ENCODE measurements at regions of chr12 and their contacts with region 1.

Region 1: DNA sequence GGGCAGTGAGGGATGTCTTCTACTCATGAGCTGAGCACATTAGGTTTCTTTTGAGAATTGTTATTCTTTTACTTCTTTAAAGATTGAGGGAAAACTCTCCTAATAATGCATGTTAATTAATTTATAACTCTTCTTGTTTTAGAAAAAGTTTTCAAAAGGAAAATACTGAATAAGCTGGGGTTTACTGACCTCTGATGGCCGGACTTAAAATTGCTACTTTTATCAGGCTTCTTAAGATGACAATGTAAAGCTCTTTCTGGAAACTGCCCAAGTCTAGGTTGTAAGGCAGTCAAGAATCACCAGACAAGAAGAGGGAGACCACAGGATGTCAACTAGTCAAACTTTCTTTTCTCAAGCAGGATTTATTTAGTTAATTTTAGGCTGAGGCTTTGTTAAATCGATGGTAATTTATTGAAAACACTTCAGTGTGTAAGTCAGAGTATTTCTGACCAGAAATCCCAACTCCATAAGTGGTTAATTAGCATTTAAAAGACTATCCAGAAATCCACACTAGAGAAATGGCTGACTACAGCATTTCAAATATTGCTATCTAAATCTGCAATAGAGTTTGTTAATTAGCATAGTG is 82.1 kb downstream of the AVPR1A start:
- DNase-seq: peak; percentile 75
- ATAC-seq: peak; percentile 67
- H3K4me3 ChIP-seq: no peak overlapping the region
- H3K27ac ChIP-seq: no peak overlapping the region
- H3K4me1 ChIP-seq: no peaks in the 10 kb centered on the region
- H3K27me3 ChIP-seq: 0 out of 2 replicates have a peak, but pooled peaks cover 2% of the 10 kb centered on the region
- CTCF ChIP-seq: peak; percentile 70
- POLR2A ChIP-seq: no peak
- RAD21 ChIP-seq: peak; percentile 81

Region 2: DNA sequence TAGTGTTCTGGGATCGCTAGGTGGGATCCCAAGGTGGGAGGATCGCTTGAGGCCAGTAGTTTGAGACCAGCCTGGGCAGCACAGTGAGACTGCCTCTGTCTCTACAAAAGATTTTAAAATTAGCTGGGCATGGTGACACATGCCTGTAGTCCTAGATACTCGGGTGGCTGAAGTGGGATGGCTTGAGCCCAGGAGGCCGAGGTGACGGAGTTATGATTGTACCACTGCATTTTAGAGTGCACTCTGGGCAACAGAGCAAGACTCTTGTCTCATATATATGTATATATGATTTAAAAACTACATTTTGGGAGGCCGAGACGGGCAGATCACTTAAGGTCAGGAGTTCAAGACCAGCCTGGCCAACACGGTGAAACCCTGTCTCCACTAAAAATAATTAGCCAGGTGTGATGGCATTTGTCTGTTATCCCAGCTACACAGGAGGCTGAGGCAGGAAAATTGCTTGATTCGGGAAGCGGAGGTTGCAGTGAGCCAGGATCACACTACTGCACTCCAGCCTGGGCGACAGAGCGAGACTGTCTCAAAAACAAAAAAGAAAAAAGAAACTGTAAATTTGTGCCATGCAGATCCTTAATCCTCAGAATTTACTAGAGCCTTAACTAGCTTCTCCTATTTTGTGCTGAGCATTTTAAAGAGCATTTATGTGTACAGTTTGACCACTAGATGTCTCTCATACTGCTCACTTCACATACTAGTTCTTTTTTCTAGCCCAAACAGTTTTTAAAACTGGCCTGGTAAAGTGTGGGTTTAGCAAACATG is 487.5 kb before region 1 on chr12:
- CTCF ChIA-PET with region 1: interaction called, 3 read pairs
- POLR2A ChIA-PET with region 1: no interaction called
- dilution Hi-C with region 1: no loop called
- in situ Hi-C with region 1: loop called (anchors 25 kb)
- intact Hi-C with region 1: no loop called
- DNase-seq: peak; percentile 73
- ATAC-seq: peak; percentile 90
- H3K4me3 ChIP-seq: no peak overlapping the region
- H3K27ac ChIP-seq: no peak overlapping the region
- H3K4me1 ChIP-seq: no peaks in the 10 kb centered on the region
- H3K27me3 ChIP-seq: no peaks in the 10 kb centered on the region
- CTCF ChIP-seq: peak; percentile 73
- POLR2A ChIP-seq: no peak
- RAD21 ChIP-seq: peak; percentile 77

Region 3: GRCh38 chr12:62603061-62603810 is 465.7 kb before region 1 on chr12:
- CTCF ChIA-PET with region 1: no interaction called
- POLR2A ChIA-PET with region 1: no interaction called
- dilution Hi-C with region 1: no loop called
- in situ Hi-C with region 1: loop called (anchors 25 kb)
- intact Hi-C with region 1: loop called (anchors 10 kb)
- DNase-seq: peak; percentile 89
- ATAC-seq: peak; percentile 90
- H3K4me3 ChIP-seq: peak overlapping the region; percentile 97
- H3K27ac ChIP-seq: peak overlapping the region; percentile 99
- H3K4me1 ChIP-seq: no peaks in the 10 kb centered on the region; the same call in 1 of the 2 replicates
- H3K27me3 ChIP-seq: no peaks in the 10 kb centered on the region
- CTCF ChIP-seq: peak; percentile 60
- POLR2A ChIP-seq: peak; percentile 88
- RAD21 ChIP-seq: peak; percentile 56

Region 4: GRCh38 chr12:62799126-62799736 is 269.7 kb before region 1 on chr12:
- CTCF ChIA-PET with region 1: interaction called, 6 read pairs
- POLR2A ChIA-PET with region 1: no interaction called
- dilution Hi-C with region 1: no loop called
- in situ Hi-C with region 1: no loop called
- intact Hi-C with region 1: loop called (anchors 1 kb)
- DNase-seq: peak; percentile 72
- ATAC-seq: peak; percentile 94
- H3K4me3 ChIP-seq: no peak overlapping the region
- H3K27ac ChIP-seq: no peak overlapping the region
- H3K4me1 ChIP-seq: no peaks in the 10 kb centered on the region
- H3K27me3 ChIP-seq: no peaks in the 10 kb centered on the region
- CTCF ChIP-seq: peak; percentile 93
- POLR2A ChIP-seq: no peak
- RAD21 ChIP-seq: peak; percentile 95

Region 5: DNA sequence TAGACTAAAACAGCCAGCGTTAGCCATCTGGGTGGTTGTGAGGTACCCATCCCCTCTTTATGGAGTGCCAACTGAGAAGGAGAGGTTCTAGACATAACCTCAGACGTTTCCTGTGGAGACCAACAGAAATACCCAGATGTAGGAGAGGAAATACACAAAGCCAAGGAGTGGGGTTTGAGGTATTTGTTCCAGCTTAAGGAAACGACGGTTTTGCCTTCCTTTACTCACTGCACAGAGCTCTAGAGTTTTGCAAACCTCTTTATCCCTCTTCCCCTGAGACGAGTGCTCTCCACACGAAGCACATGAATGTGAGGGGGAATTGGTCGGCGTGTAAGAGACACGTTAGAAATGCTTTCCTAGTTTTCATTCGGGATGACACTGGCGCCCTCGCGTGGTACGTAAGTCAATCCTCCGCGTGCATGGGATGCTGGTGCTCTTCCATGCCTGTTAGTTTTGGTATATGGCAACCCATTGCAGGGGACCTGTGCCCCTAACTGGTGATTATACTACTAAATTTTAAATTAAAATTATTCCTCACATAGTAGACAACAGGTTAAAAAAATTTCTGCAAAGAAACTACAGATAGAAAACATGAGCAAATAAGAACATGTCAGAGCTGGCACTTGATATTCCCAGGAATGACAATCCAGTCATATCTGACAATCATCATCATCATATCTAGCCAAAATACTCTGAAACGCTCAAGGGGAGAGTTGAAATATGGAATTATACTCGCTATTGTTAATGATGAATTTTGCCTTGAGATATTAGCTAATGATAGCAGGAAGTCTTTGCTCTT is 255.7 kb before region 1 on chr12:
- CTCF ChIA-PET with region 1: interaction called, 18 read pairs
- POLR2A ChIA-PET with region 1: no interaction called
- dilution Hi-C with region 1: no loop called
- in situ Hi-C with region 1: loop called (anchors 5 kb)
- intact Hi-C with region 1: loop called (anchors 2 kb)
- DNase-seq: peak; percentile 68
- ATAC-seq: peak; percentile 89
- H3K4me3 ChIP-seq: no peak overlapping the region
- H3K27ac ChIP-seq: no peak overlapping the region
- H3K4me1 ChIP-seq: no peaks in the 10 kb centered on the region
- H3K27me3 ChIP-seq: peaks cover 20% of the 10 kb centered on the region
- CTCF ChIP-seq: peak; percentile 65
- POLR2A ChIP-seq: no peak
- RAD21 ChIP-seq: peak; percentile 70